ENCODE measurements at regions of chr21 and their contacts with region 1.

Region 1: GRCh38 chr21:42781150-42781970 is 98.0 kb downstream of the WDR4 start:
- DNase-seq: peak; percentile 34
- ATAC-seq: no peak
- H3K4me3 ChIP-seq: no peak overlapping the region
- H3K4me3 Mint-ChIP-seq: peak overlapping the region; percentile 27
- H3K27ac ChIP-seq: no peak overlapping the region
- H3K27ac Mint-ChIP-seq: peak overlapping the region; percentile 51
- H3K4me1 ChIP-seq: peaks cover 33 to 50% of the 10 kb centered on the region in 2 donors
- H3K4me1 Mint-ChIP-seq: peaks cover 60% of the 10 kb centered on the region
- H3K27me3 ChIP-seq: peaks cover 0 to 33% (median 2%) of the 10 kb centered on the region in 4 experiments
- H3K27me3 Mint-ChIP-seq: peaks cover 30% of the 10 kb centered on the region
- CTCF ChIP-seq: no peak

Region 2: GRCh38 chr21:42691901-42692559 is 89.3 kb before region 1 on chr21:
- CTCF ChIA-PET with region 1: no interaction called
- POLR2A ChIA-PET with region 1: no interaction called
- intact Hi-C with region 1: no loop called
- DNase-seq: no peak
- ATAC-seq: no peak
- H3K4me3 ChIP-seq: no peak overlapping the region
- H3K4me3 Mint-ChIP-seq: no peak overlapping the region
- H3K27ac ChIP-seq: no peak overlapping the region
- H3K27ac Mint-ChIP-seq: no peak overlapping the region
- H3K4me1 ChIP-seq: no peaks in the 10 kb centered on the region
- H3K4me1 Mint-ChIP-seq: no peaks in the 10 kb centered on the region
- H3K27me3 ChIP-seq: no peaks in the 10 kb centered on the region
- H3K27me3 Mint-ChIP-seq: peaks cover 3% of the 10 kb centered on the region
- CTCF ChIP-seq: no peak

Region 3: GRCh38 chr21:42746593-42747275 is 34.6 kb before region 1 on chr21:
- CTCF ChIA-PET with region 1: no interaction called
- POLR2A ChIA-PET with region 1: interaction called, 3 read pairs
- intact Hi-C with region 1: loop called (anchors 5 kb)
- DNase-seq: peak; percentile 67
- ATAC-seq: peak; percentile 65
- H3K4me3 ChIP-seq: peak overlapping the region; percentile 9 to 45 (median 35)
- H3K4me3 Mint-ChIP-seq: peak overlapping the region; percentile 86
- H3K27ac ChIP-seq: peak overlapping the region; percentile 54 to 78
- H3K27ac Mint-ChIP-seq: peak overlapping the region; percentile 89
- H3K4me1 ChIP-seq: peaks cover 24 to 26% of the 10 kb centered on the region in 2 donors
- H3K4me1 Mint-ChIP-seq: peaks cover 16% of the 10 kb centered on the region
- H3K27me3 ChIP-seq: peaks cover 0 to 5% (median 0%) of the 10 kb centered on the region in 4 experiments
- H3K27me3 Mint-ChIP-seq: no peaks in the 10 kb centered on the region
- CTCF ChIP-seq: no peak

Region 4: GRCh38 chr21:42799516-42799915 is 18.2 kb after region 1 on chr21:
- CTCF ChIA-PET with region 1: no interaction called
- POLR2A ChIA-PET with region 1: no interaction called
- intact Hi-C with region 1: loop called (anchors 2 kb)
- DNase-seq: no peak
- ATAC-seq: peak; percentile 26
- H3K4me3 ChIP-seq: no peak overlapping the region
- H3K4me3 Mint-ChIP-seq: peak overlapping the region; percentile 42
- H3K27ac ChIP-seq: peak overlapping the region; percentile 66 to 73
- H3K27ac Mint-ChIP-seq: peak overlapping the region; percentile 88
- H3K4me1 ChIP-seq: peaks cover 16 to 17% of the 10 kb centered on the region in 2 donors
- H3K4me1 Mint-ChIP-seq: peaks cover 22% of the 10 kb centered on the region
- H3K27me3 ChIP-seq: no peaks in the 10 kb centered on the region
- H3K27me3 Mint-ChIP-seq: no peaks in the 10 kb centered on the region
- CTCF ChIP-seq: no peak

Region 5: DNA sequence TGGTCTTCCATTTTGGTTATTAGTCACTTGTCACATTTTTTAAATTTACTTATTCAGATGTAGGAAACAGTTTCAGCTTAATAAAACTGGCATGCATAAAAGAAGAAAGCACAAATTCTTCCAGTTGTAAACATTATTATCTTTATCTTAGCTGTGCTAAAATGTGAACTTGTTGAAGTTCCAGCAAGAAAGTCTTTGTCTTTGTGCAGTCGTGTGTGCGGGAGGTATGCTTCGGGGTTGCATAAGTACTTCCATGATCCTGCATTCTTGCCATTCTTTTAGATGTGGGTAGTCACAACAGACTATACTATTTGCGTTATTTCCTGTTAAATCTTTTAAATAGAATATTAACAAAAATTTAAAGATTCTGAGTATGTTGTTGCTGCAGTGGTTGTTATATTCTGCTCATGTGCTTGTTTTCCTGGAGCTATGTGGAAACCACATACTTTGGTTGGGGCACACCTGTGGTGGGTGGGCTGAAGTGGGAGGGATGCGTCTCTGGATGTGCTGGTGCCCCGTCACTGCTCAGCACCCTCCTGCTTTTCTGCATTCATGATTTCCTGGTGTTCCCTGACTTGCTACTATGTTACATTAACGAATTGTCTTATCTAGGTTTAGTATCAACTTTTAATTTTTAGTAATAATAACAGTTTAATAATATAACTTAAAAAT is 244.4 kb after region 1 on chr21:
- CTCF ChIA-PET with region 1: no interaction called
- POLR2A ChIA-PET with region 1: no interaction called
- intact Hi-C with region 1: no loop called
- DNase-seq: no peak
- ATAC-seq: no peak
- H3K4me3 ChIP-seq: no peak overlapping the region
- H3K4me3 Mint-ChIP-seq: no peak overlapping the region
- H3K27ac ChIP-seq: no peak overlapping the region
- H3K27ac Mint-ChIP-seq: no peak overlapping the region
- H3K4me1 ChIP-seq: peaks cover 0 to 3% of the 10 kb centered on the region in 2 donors
- H3K4me1 Mint-ChIP-seq: peaks cover 4% of the 10 kb centered on the region
- H3K27me3 ChIP-seq: no peaks in the 10 kb centered on the region
- H3K27me3 Mint-ChIP-seq: no peaks in the 10 kb centered on the region
- CTCF ChIP-seq: no peak

Measured in B cell (primary cell).